ENCODE measurements at regions of chr1 and their contacts with region 1.

Region 1: DNA sequence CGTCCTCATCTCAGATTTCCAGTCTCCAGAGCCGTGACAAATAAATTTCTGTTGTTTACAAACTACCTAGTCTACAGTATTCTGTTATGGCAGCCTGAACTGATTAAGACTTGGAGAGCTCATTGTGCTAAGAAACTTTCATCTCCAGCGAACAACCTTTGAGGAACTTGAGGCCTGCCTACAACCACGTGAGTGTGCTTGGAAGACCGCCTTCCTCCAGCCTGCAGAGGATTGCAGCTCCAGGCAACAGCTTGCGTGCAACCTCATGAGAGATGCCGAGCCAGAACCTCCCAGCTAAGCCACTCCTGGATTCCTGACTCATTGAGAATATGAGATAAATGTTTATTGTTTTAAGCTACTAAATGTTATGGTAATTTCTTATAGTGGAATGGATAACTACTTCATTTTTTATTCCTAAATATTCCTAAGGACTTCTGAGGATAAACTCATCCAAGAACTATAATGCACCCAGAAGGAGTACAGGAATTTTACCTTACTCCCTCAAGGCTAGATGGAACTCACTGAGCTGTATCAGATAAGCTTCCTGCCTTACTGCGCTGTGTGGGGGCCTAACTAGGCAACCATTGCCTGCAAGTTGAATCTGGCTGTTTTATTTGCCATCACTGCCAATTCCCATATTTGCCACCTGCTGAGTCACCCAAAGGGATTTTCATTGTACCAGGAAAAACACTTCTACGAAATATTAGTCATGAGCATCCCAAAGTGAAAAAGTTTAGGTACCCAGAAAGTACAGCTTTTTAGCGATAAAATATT is 17.6 kb downstream of the FAM177B start:
- DNase-seq: peak; percentile 88
- H3K4me3 ChIP-seq: no peak overlapping the region
- H3K27ac ChIP-seq: peak overlapping the region in 3 of 4 donors; percentile 79 to 89 (median 89)
- H3K4me1 ChIP-seq: peaks cover 0 to 45% (median 32%) of the 10 kb centered on the region in 4 donors
- H3K27me3 ChIP-seq: no peaks in the 10 kb centered on the region
- CTCF ChIP-seq: no peak
- EP300 ChIP-seq: peak in 1 of 4 donors; percentile 28
- POLR2A ChIP-seq: no peak

Region 2: DNA sequence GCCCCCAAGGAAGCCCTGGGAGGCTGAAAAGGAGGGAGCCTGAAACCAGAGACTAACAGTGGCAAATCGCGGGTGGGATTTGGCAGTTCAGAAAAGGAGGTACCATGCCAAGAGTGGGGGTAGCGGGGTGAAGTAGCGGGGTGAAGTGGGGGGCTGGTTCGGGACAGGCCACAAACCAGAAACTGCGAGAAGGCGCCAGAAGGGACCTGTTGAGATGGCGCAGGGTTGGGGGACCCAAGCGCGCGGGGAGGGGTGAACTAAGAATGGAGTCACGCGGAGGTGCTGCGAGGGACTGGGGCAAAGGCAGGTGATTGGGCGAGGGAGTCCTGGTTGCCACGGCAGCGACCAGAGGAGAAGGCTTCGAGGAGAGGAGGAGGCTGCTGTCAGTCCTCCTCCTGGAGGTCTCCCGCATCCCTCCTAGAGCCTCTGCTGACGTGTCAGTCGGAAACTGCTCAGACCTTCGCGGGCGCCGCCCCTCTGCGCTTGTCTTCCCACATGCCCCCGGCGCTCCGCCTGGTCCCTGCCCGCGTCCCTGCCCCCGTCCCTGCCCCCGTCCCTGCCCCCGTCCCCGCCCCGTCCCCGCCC is 137.1 kb before region 1 on chr1:
- intact Hi-C with region 1: no loop called
- DNase-seq: peak; percentile 98
- H3K4me3 ChIP-seq: peak overlapping the region; percentile 35 to 100 (median 98)
- H3K27ac ChIP-seq: peak overlapping the region; percentile 73 to 83 (median 80)
- H3K4me1 ChIP-seq: peaks cover 0 to 20% (median 15%) of the 10 kb centered on the region in 4 donors
- H3K27me3 ChIP-seq: no peaks in the 10 kb centered on the region
- CTCF ChIP-seq: no peak
- EP300 ChIP-seq: no peak
- POLR2A ChIP-seq: peak; percentile 11 to 21

Region 3: DNA sequence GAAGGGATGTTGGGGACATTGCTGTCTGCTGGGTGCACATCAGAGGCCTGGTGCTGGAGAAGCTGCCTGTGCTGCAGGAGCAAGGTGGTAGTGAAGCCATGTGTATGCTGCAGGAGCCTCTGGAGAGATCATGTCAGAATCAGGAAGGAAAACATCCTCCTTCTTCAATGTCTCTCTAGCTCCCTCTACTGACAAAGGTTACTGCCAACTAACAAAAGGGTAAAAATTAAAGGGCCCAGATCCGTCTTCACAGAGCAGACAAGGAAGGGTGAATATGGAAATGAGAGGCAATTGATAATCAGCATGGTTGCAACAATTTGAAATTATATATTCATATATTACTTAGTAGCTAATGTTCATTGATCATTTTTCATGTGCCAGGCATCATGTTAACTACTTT is 14.6 kb after region 1 on chr1:
- intact Hi-C with region 1: loop called (anchors 2 kb)
- DNase-seq: no peak
- H3K4me3 ChIP-seq: no peak overlapping the region
- H3K27ac ChIP-seq: peak overlapping the region in 3 of 4 donors; percentile 46 to 75 (median 56)
- H3K4me1 ChIP-seq: peaks cover 0 to 21% (median 0%) of the 10 kb centered on the region in 4 donors
- H3K27me3 ChIP-seq: no peaks in the 10 kb centered on the region
- CTCF ChIP-seq: no peak
- EP300 ChIP-seq: no peak
- POLR2A ChIP-seq: no peak

Region 4: DNA sequence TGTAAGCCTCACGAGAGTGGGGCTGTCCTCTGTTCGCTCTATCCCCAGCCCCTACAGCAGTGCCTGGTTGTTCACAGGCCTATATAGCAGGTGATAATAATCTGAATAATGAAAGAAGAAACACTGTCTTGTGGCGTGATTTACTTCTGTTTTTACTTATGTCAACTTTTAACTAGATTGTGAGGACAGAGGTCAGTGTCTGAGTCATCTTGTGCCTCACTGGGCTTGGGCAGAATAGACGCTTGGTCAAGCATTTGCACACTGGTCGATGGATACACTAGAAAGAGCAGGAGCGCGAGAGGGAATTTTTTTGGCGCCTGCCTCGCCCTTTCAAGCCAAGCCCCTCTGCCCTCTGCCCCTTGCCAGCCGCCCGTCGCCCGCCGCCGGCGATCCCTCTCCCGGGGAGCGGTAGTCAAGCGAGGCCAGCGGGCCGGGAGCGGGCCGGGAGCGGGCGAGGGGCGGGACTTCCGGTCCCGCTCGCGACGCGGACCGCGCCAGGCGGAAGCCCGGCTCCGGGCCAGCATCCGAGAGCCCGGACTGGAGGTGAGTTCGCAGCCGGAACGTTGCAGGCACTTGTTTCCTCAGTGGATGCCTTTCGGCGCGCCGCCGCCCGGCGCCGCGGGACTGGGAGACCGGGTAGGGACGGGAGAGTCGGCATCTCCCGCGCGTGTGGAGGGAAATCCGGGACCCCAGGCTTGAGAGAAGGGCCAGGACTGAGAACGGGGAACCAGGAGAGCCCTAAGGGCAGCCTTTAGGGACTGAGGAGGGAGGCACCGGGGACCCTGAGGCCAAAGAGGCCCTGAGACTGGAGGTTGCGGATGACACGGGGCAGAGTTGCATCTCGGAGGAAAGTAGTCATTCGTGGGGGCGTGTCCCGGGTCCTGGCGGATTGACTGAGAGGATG is 60.2 kb after region 1 on chr1 and contains the start of gene DISP1:
- intact Hi-C with region 1: loop called (anchors 5 kb)
- DNase-seq: peak; percentile 95
- H3K4me3 ChIP-seq: peak within 1 kb of the TSS; percentile 72 to 92 (median 90)
- H3K27ac ChIP-seq: peak within 1 kb of the TSS; percentile 89 to 99 (median 98)
- H3K4me1 ChIP-seq: peaks cover 4 to 51% (median 34%) of the 10 kb centered on the region in 4 donors
- H3K27me3 ChIP-seq: no peaks in the 10 kb centered on the region
- CTCF ChIP-seq: peak in 1 of 4 experiments; percentile 23
- EP300 ChIP-seq: peak in 1 of 4 donors; percentile 16
- POLR2A ChIP-seq: peak; percentile 65 to 84
- total RNA-seq, gene DISP1: 17.1 to 31.3 (median 23.5) TPM

Region 5: DNA sequence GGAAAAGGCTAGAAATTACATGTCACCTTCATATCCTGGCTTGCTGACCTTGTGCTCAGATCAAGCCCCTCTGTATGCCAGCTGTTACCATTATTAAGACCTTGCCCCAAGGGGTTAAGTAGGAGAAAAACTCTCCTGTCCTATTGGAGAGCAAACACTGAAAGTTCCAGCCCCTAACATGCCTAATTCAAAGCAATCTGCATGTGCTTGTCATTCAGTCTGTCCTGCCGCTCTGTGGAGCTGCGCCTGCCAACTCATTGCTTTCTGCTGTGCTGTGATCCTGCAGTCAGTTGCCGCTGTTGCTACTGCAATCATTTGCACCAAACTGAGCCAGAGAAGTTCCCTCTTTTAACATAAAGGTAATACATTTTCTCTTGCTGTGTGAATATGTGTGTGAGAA is 173.7 kb after region 1 on chr1:
- intact Hi-C with region 1: loop called (anchors 10 kb)
- DNase-seq: peak; percentile 75
- H3K4me3 ChIP-seq: peak overlapping the region; percentile 15 to 43 (median 38)
- H3K27ac ChIP-seq: peak overlapping the region; percentile 54 to 68 (median 60)
- H3K4me1 ChIP-seq: peaks cover 0 to 83% (median 44%) of the 10 kb centered on the region in 4 donors
- H3K27me3 ChIP-seq: no peaks in the 10 kb centered on the region
- CTCF ChIP-seq: no peak
- EP300 ChIP-seq: no peak
- POLR2A ChIP-seq: no peak

Region 6: GRCh38 chr1:222974496-222974895 is 219.9 kb after region 1 on chr1:
- intact Hi-C with region 1: loop called (anchors 5 kb)
- DNase-seq: no peak
- H3K4me3 ChIP-seq: no peak overlapping the region
- H3K27ac ChIP-seq: peak overlapping the region in 3 of 4 donors; percentile 64 to 77 (median 68)
- H3K4me1 ChIP-seq: peaks cover 0 to 46% (median 31%) of the 10 kb centered on the region in 4 donors
- H3K27me3 ChIP-seq: no peaks in the 10 kb centered on the region
- CTCF ChIP-seq: no peak
- EP300 ChIP-seq: peak; percentile 93 to 97 (median 96)
- POLR2A ChIP-seq: no peak

Measured in sigmoid colon (tissue), 7 donors.